Natural killer cell (primary cell): ENCODE measurements at regions of chr14 and their contacts with region 1.

Region 1: GRCh38 chr14:106506881-106507305 is 980.5 kb downstream of the TMEM121 start:
- DNase-seq: peak; percentile 55 to 83
- ATAC-seq: peak; percentile 71 to 83 (median 81)
- H3K4me3 ChIP-seq: peak overlapping the region; percentile 17
- H3K4me3 Mint-ChIP-seq: peak overlapping the region; percentile 89
- H3K27ac ChIP-seq: peak overlapping the region; percentile 49
- H3K27ac Mint-ChIP-seq: peak overlapping the region; percentile 87 to 90
- H3K4me1 ChIP-seq: peaks cover 71% of the 10 kb centered on the region
- H3K4me1 Mint-ChIP-seq: peaks cover 81% of the 10 kb centered on the region in 2 donors
- H3K27me3 ChIP-seq: no peaks in the 10 kb centered on the region
- H3K27me3 Mint-ChIP-seq: peaks cover 0 to 5% of the 10 kb centered on the region in 2 donors
- CTCF ChIP-seq: no peak

Region 2: GRCh38 chr14:105878101-105878500 is 628.8 kb before region 1 on chr14:
- intact Hi-C with region 1: no loop called
- DNase-seq: no peak
- ATAC-seq: no peak
- H3K4me3 ChIP-seq: no peak overlapping the region
- H3K4me3 Mint-ChIP-seq: no peak overlapping the region
- H3K27ac ChIP-seq: no peak overlapping the region
- H3K27ac Mint-ChIP-seq: no peak overlapping the region
- H3K4me1 ChIP-seq: peaks cover 10% of the 10 kb centered on the region
- H3K4me1 Mint-ChIP-seq: no peaks in the 10 kb centered on the region
- H3K27me3 ChIP-seq: peaks cover 3% of the 10 kb centered on the region
- H3K27me3 Mint-ChIP-seq: peaks cover 35 to 41% of the 10 kb centered on the region in 2 donors
- CTCF ChIP-seq: no peak

Region 3: DNA sequence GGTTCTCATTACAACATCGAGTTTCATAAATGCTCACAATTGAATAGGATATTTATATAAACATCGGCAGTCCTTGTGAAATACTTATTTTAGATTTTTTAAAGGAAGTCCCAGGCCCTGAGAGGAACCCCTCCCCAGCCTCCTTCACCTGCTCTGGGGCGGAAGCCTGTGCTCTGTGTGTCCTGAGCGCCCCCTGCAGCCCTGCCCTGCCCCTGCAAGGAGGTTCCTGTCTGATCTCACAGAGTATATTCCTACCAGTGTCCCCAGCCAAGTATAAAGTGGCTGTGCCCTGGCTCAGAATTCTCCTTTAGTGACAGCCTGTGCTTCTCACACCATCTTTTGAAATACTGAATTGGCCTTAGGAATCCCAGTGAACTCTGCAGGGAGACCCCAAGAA is 321.1 kb before region 1 on chr14:
- intact Hi-C with region 1: loop called (anchors 10 kb)
- DNase-seq: peak; percentile 58 to 81
- ATAC-seq: peak; percentile 53 to 71 (median 69)
- H3K4me3 ChIP-seq: no peak overlapping the region
- H3K4me3 Mint-ChIP-seq: peak overlapping the region; percentile 71
- H3K27ac ChIP-seq: no peak overlapping the region
- H3K27ac Mint-ChIP-seq: peak overlapping the region; percentile 37 to 67
- H3K4me1 ChIP-seq: peaks cover 22% of the 10 kb centered on the region
- H3K4me1 Mint-ChIP-seq: peaks cover 28 to 29% of the 10 kb centered on the region in 2 donors
- H3K27me3 ChIP-seq: peaks cover 30% of the 10 kb centered on the region
- H3K27me3 Mint-ChIP-seq: peaks cover 55 to 60% of the 10 kb centered on the region in 2 donors
- CTCF ChIP-seq: peak; percentile 63

Region 4: DNA sequence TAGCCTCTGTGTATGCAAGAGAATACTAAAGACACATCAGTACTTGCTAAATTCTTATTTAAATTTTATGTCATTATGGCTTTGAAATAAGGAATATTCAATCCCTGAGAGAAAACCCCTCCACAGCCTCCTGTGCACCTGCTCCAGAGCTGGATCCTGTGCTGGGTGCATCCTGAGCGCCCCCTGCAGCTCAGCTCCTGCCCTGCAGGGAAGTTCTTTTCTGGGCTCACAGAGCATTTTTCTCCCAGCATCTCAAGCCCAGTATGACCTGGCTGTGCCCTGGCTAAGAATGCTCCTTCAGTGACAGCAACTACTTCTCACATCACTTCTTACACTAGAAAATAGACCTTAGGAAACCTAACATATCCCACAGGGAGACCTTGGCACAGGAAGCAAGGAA is 231.2 kb after region 1 on chr14:
- intact Hi-C with region 1: loop called (anchors 10 kb)
- DNase-seq: peak in 1 of 2 donors; percentile 51
- ATAC-seq: no peak
- H3K4me3 ChIP-seq: peak overlapping the region; percentile 65
- H3K4me3 Mint-ChIP-seq: peak overlapping the region; percentile 77
- H3K27ac ChIP-seq: peak overlapping the region; percentile 96
- H3K27ac Mint-ChIP-seq: peak overlapping the region; percentile 69 to 86
- H3K4me1 ChIP-seq: peaks cover 30% of the 10 kb centered on the region
- H3K4me1 Mint-ChIP-seq: peaks cover 14 to 68% of the 10 kb centered on the region in 2 donors
- H3K27me3 ChIP-seq: no peaks in the 10 kb centered on the region
- H3K27me3 Mint-ChIP-seq: no peaks in the 10 kb centered on the region
- CTCF ChIP-seq: peak; percentile 66